Panc1 (cell line): ENCODE measurements at regions of chr5 and their contacts with region 1.

Region 1: GRCh38 chr5:149841851-149842793 is 102.5 kb downstream of the PDE6A start:
- DNase-seq: no peak
- ATAC-seq: no peak
- H3K4me3 ChIP-seq: no peak overlapping the region
- H3K27ac ChIP-seq: no peak overlapping the region
- H3K4me1 ChIP-seq: peaks cover 10% of the 10 kb centered on the region
- H3K27me3 ChIP-seq: no peaks in the 10 kb centered on the region
- CTCF ChIP-seq: no peak

Region 2: GRCh38 chr5:149872351-149873040 is 30.4 kb after region 1 on chr5:
- CTCF ChIA-PET with region 1: interaction called, 8 read pairs
- POLR2A ChIA-PET with region 1: interaction called, 11 read pairs
- in situ Hi-C with region 1: no loop called
- intact Hi-C with region 1: no loop called
- DNase-seq: no peak
- ATAC-seq: no peak
- H3K4me3 ChIP-seq: no peak overlapping the region
- H3K27ac ChIP-seq: no peak overlapping the region; the same call in 1 of the 2 replicates
- H3K4me1 ChIP-seq: 0 out of 2 replicates have a peak, but pooled peaks cover 4% of the 10 kb centered on the region
- H3K27me3 ChIP-seq: no peaks in the 10 kb centered on the region
- CTCF ChIP-seq: no peak

Region 3: GRCh38 chr5:149917073-149917676 is 75.1 kb after region 1 on chr5:
- CTCF ChIA-PET with region 1: no interaction called
- POLR2A ChIA-PET with region 1: no interaction called
- in situ Hi-C with region 1: no loop called
- intact Hi-C with region 1: no loop called
- DNase-seq: no peak
- ATAC-seq: no peak
- H3K4me3 ChIP-seq: no peak overlapping the region
- H3K27ac ChIP-seq: peak overlapping the region; percentile 17; the same call in 1 of the 2 replicates
- H3K4me1 ChIP-seq: no peaks in the 10 kb centered on the region
- H3K27me3 ChIP-seq: no peaks in the 10 kb centered on the region
- CTCF ChIP-seq: no peak

Region 4: GRCh38 chr5:150052956-150053712 is 211.0 kb after region 1 on chr5:
- CTCF ChIA-PET with region 1: no interaction called
- POLR2A ChIA-PET with region 1: no interaction called
- in situ Hi-C with region 1: no loop called
- intact Hi-C with region 1: no loop called
- DNase-seq: no peak
- ATAC-seq: no peak
- H3K4me3 ChIP-seq: no peak overlapping the region
- H3K27ac ChIP-seq: no peak overlapping the region
- H3K4me1 ChIP-seq: no peaks in the 10 kb centered on the region
- H3K27me3 ChIP-seq: no peaks in the 10 kb centered on the region
- CTCF ChIP-seq: no peak

Region 5: DNA sequence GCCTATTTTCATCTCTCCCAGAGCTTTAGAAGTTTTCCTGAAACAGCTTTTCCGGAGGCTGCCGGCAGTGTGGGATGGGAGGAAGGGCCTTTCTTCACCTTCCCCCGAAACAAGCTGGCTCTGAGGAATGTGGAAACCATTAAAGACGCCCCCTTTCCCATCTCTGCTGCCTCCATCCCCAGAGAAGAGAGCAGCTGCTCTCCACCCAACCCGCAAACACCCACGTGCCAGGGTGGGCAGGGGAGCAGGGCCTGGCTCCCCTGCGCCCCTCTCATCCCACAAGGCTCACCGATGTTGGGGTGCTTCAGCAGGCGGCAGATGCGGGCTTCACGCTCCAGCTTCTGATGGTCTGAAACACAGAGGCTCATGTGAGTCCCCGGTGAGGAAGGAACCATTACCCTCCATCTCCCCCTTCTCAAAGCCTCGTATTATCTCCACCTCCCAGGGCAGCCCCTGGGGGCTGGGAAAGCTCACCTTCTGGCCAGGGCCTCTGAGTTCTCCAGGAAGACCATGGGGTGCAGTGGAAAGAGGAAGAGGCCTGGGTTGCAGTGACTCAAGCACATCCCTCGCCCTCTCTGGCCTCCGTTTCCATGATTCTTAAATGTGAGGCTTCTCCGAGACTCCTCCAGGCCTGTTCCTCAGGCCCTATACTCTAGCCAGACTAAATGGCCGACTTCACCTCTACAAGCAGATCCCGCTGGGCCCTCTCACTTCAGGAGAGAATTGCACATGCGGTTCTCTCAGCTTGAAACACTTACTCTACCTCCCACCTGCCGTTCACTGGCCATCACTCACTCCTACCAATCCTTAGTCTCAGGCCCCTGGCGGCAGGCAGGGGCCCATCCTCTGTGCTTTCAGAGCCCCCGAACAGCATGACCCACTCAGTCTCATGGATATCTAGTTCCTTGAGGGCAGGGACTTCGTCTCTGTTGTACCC is 422.8 kb after region 1 on chr5:
- CTCF ChIA-PET with region 1: no interaction called
- POLR2A ChIA-PET with region 1: interaction called, 11 read pairs
- in situ Hi-C with region 1: no loop called
- intact Hi-C with region 1: no loop called
- DNase-seq: no peak
- ATAC-seq: no peak
- H3K4me3 ChIP-seq: no peak overlapping the region
- H3K27ac ChIP-seq: peak overlapping the region; percentile 36
- H3K4me1 ChIP-seq: peaks cover 38% of the 10 kb centered on the region
- H3K27me3 ChIP-seq: no peaks in the 10 kb centered on the region
- CTCF ChIP-seq: no peak